B cell (primary cell): ENCODE measurements at regions of chr6 and their contacts with region 1.

Region 1: DNA sequence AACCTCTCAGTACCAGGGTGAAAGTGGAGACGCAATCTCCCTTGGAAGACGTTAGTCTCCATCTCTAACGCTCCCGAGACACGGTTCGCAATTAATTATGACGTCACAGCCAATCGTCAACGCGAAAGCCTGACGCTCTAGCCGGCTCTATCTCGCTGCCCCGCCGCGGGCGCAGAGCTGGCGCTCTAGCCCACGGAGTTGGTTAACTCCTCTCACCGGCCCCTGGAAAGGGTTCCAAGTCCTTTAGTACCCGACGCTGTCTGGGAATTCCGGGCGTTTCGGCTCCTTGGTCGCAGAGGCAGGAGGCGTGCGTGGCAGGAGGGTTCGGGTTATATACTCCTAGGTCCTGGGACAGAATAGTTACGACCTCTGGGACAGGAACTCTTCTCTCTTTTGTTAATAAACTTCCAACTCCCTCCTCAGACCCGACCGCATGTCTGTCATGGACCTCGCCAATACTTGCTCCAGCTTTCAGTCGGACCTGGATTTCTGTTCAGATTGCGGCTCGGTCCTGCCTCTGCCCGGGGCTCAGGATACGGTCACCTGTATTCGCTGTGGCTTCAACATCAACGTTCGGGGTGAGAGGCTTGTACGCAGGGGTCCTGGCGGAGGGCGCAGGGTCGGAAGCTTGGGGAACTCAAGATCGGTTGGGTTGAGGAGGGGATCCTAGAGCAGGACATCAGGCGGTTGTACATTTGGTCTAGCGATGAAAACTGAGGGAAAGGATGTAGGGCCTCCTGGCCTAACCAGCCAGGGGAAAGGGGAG is at the start of gene POLR1H:
- DNase-seq: peak; percentile 95
- ATAC-seq: peak; percentile 90
- H3K4me3 ChIP-seq: peak within 1 kb of the TSS; percentile 80 to 100 (median 92)
- H3K4me3 Mint-ChIP-seq: peak within 1 kb of the TSS; percentile 100
- H3K27ac ChIP-seq: peak within 1 kb of the TSS; percentile 95 to 97
- H3K27ac Mint-ChIP-seq: peak within 1 kb of the TSS; percentile 99
- H3K4me1 ChIP-seq: peaks cover 25 to 30% of the 10 kb centered on the region in 2 donors
- H3K4me1 Mint-ChIP-seq: peaks cover 41% of the 10 kb centered on the region
- H3K27me3 ChIP-seq: no peaks in the 10 kb centered on the region
- H3K27me3 Mint-ChIP-seq: no peaks in the 10 kb centered on the region
- CTCF ChIP-seq: no peak
- total RNA-seq, gene POLR1H: 38.8 and 39.7 TPM in 2 replicates

Region 2: DNA sequence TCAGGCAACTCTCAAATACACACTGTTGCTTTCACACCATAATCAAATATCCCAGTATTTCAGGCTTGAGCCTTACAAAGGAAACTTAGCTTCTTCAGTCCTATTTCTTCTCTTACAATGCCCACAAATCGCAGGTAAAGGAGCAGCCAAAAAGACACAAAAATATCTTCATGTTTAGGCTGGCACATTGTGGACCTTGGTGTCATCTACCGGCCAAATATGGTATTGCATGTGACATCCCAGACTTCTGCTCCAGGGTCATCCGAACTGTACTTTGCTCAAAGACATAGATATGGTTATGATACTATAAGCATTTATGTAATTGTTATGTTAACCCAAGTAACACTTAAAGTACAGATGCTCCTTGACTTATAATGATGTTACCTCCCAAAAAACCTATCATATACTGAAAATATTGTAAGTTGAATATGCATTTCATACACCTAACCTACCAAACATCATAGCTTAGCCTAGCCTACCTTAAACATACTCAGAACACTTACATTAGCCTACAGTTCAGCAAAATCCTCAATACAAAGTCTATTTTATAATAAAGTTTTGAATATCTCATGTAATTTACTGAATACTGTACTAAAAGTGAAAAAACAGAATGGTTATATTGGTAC is 471.7 kb before region 1 on chr6:
- CTCF ChIA-PET with region 1: no interaction called
- POLR2A ChIA-PET with region 1: no interaction called
- intact Hi-C with region 1: no loop called
- DNase-seq: peak; percentile 72
- ATAC-seq: peak; percentile 80
- H3K4me3 ChIP-seq: no peak overlapping the region
- H3K4me3 Mint-ChIP-seq: no peak overlapping the region
- H3K27ac ChIP-seq: no peak overlapping the region
- H3K27ac Mint-ChIP-seq: no peak overlapping the region
- H3K4me1 ChIP-seq: peaks cover 0 to 5% of the 10 kb centered on the region in 2 donors
- H3K4me1 Mint-ChIP-seq: peaks cover 2% of the 10 kb centered on the region
- H3K27me3 ChIP-seq: peaks cover 0 to 3% (median 0%) of the 10 kb centered on the region in 4 experiments
- H3K27me3 Mint-ChIP-seq: peaks cover 30% of the 10 kb centered on the region
- CTCF ChIP-seq: peak; percentile 98

Region 3: GRCh38 chr6:29887819-29888776 is 173.2 kb before region 1 on chr6:
- CTCF ChIA-PET with region 1: no interaction called
- POLR2A ChIA-PET with region 1: interaction called, 3 read pairs
- intact Hi-C with region 1: loop called (anchors 2 kb)
- DNase-seq: peak; percentile 93
- ATAC-seq: peak; percentile 84
- H3K4me3 ChIP-seq: peak overlapping the region; percentile 31 to 93 (median 90)
- H3K4me3 Mint-ChIP-seq: peak overlapping the region; percentile 94
- H3K27ac ChIP-seq: peak overlapping the region; percentile 92 to 95
- H3K27ac Mint-ChIP-seq: peak overlapping the region; percentile 96
- H3K4me1 ChIP-seq: peaks cover 7 to 23% of the 10 kb centered on the region in 2 donors
- H3K4me1 Mint-ChIP-seq: peaks cover 11% of the 10 kb centered on the region
- H3K27me3 ChIP-seq: no peaks in the 10 kb centered on the region
- H3K27me3 Mint-ChIP-seq: no peaks in the 10 kb centered on the region
- CTCF ChIP-seq: no peak

Region 4: GRCh38 chr6:30130887-30131862 is 69.9 kb after region 1 on chr6:
- CTCF ChIA-PET with region 1: interaction called, 16 read pairs
- POLR2A ChIA-PET with region 1: no interaction called
- intact Hi-C with region 1: no loop called
- DNase-seq: peak; percentile 87
- ATAC-seq: peak; percentile 92
- H3K4me3 ChIP-seq: no peak overlapping the region
- H3K4me3 Mint-ChIP-seq: no peak overlapping the region
- H3K27ac ChIP-seq: no peak overlapping the region
- H3K27ac Mint-ChIP-seq: no peak overlapping the region
- H3K4me1 ChIP-seq: peaks cover 13 to 18% of the 10 kb centered on the region in 2 donors
- H3K4me1 Mint-ChIP-seq: peaks cover 12% of the 10 kb centered on the region
- H3K27me3 ChIP-seq: peaks cover 0 to 55% (median 46%) of the 10 kb centered on the region in 4 experiments
- H3K27me3 Mint-ChIP-seq: peaks cover 60% of the 10 kb centered on the region
- CTCF ChIP-seq: peak; percentile 100